GM12878 (cell line): ENCODE measurements at regions of chr19 and their contacts with region 1.

Region 1: DNA sequence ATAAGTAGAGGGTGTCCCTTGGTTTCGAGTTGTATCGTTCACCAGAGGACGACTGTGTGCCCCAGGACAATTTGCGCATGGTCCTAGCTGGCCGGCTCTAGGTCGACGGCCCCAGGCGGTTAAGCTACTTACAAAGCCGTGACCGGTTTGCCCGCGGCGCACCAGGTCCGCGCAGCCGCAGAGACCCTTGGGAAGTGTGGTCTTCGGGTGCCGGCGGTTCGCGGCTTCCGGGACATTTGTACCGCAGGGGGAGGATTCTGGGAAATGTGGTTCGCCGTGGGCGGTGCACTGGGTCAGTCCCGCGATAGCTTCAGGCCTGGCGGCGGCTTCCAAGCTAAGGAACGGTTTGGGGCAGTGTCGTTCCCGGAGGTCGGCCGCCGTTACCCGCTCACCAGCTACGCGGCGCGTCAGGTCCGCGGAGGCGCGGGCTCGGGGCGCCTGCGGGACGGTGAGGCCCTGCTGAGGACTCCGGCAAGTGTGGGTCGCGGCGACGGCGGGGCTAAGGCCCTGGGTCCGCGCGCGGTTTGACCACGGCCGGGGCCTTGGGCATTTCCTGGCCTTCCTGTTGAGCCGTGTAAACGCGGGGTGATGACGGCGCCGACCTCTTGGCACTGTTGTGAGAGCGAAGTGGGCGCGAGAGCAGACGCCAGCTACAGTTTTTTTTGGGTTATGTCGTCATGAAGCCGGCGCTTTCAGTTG is at the start of gene ZNF302:
- DNase-seq: peak; percentile 85
- ATAC-seq: peak; percentile 94
- H3K4me3 ChIP-seq: peak within 1 kb of the TSS; percentile 67
- H3K27ac ChIP-seq: peak within 1 kb of the TSS; percentile 95
- H3K4me1 ChIP-seq: peaks cover 10% of the 10 kb centered on the region
- H3K27me3 ChIP-seq: no peaks in the 10 kb centered on the region
- CTCF ChIP-seq: no peak
- EP300 ChIP-seq: no peak; a peak in 1 of 4 replicates
- POLR2A ChIP-seq: peak; percentile 93
- RAD21 ChIP-seq: no peak
- polyA plus RNA-seq, gene ZNF302: 8.4 to 8.6 TPM

Region 2: GRCh38 chr19:34171877-34172660 is 505.5 kb before region 1 on chr19 and contains the start of gene LSM14A:
- CTCF ChIA-PET with region 1: no interaction called
- POLR2A ChIA-PET with region 1: no interaction called
- RAD21 ChIA-PET with region 1: no interaction called
- SMC1A ChIA-PET with region 1: no interaction called
- in situ Hi-C with region 1: no loop called
- intact Hi-C with region 1: loop called (anchors 5 kb)
- DNase-seq: peak; percentile 33
- ATAC-seq: peak; percentile 76
- H3K4me3 ChIP-seq: peak within 1 kb of the TSS; percentile 80
- H3K27ac ChIP-seq: peak within 1 kb of the TSS; percentile 99
- H3K4me1 ChIP-seq: peaks cover 17% of the 10 kb centered on the region
- H3K27me3 ChIP-seq: no peaks in the 10 kb centered on the region
- CTCF ChIP-seq: no peak
- EP300 ChIP-seq: no peak
- POLR2A ChIP-seq: peak; percentile 96
- RAD21 ChIP-seq: no peak
- polyA plus RNA-seq, gene LSM14A: 21.9 to 31.1 TPM

Region 3: GRCh38 chr19:34639491-34640085 is 37.9 kb before region 1 on chr19:
- CTCF ChIA-PET with region 1: interaction called, 12 read pairs
- POLR2A ChIA-PET with region 1: interaction called, 7 read pairs
- RAD21 ChIA-PET with region 1: no interaction called
- SMC1A ChIA-PET with region 1: no interaction called
- in situ Hi-C with region 1: no loop called
- intact Hi-C with region 1: no loop called
- DNase-seq: peak; percentile 13
- ATAC-seq: peak; percentile 72
- H3K4me3 ChIP-seq: no peak overlapping the region
- H3K27ac ChIP-seq: no peak overlapping the region
- H3K4me1 ChIP-seq: no peaks in the 10 kb centered on the region
- H3K27me3 ChIP-seq: no peaks in the 10 kb centered on the region
- CTCF ChIP-seq: peak; percentile 75 to 76 (median 76)
- EP300 ChIP-seq: no peak
- POLR2A ChIP-seq: no peak
- RAD21 ChIP-seq: peak; percentile 80

Region 4: DNA sequence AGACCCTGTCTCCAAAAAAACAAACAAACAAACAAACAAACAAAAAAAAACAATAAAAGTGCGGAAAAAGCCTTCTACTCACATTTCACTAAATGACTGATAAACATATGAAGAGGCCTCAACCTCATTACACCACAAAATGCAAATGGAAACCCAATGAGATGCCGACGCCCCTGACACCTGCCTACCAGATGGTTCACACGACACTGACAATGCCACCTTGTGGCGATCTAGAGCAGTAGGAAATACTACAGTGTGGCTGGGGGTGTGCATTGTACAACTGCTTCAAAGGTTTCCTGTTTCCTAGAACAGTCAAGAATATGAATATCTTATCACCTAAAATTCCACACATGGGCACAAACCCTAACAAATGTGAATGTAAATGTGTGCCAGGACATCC is 14.6 kb before region 1 on chr19:
- CTCF ChIA-PET with region 1: interaction called, 12 read pairs
- POLR2A ChIA-PET with region 1: no interaction called
- RAD21 ChIA-PET with region 1: no interaction called
- SMC1A ChIA-PET with region 1: no interaction called
- in situ Hi-C with region 1: no loop called
- intact Hi-C with region 1: no loop called
- DNase-seq: no peak
- ATAC-seq: peak; percentile 96
- H3K4me3 ChIP-seq: no peak overlapping the region
- H3K27ac ChIP-seq: no peak overlapping the region
- H3K4me1 ChIP-seq: no peaks in the 10 kb centered on the region
- H3K27me3 ChIP-seq: no peaks in the 10 kb centered on the region
- CTCF ChIP-seq: peak; percentile 39 to 48 (median 42); a peak in 4 of 6 replicates
- EP300 ChIP-seq: no peak
- POLR2A ChIP-seq: no peak
- RAD21 ChIP-seq: peak; percentile 25; the same call in 1 of the 2 replicates

Region 5: DNA sequence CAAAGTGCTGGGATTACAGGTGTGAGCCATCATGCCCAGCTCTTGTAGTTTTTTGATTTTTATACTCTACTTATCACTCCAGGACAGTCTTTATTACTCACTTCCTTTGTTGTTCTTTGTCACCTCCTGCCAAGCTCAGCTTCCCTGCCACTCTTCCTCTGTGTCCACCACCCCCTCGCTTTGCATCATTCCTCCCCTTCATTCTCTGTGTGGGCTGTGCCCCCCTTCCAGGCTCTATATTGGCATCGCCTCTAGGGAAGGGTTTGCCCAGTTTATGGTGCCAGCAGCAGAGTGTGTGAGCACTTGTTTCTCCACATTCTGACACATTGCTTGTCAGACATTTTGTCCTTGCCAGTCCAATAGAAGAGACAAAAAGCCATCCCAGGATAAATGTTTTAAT is 15.0 kb after region 1 on chr19:
- CTCF ChIA-PET with region 1: no interaction called
- POLR2A ChIA-PET with region 1: no interaction called
- RAD21 ChIA-PET with region 1: no interaction called
- SMC1A ChIA-PET with region 1: no interaction called
- in situ Hi-C with region 1: no loop called
- intact Hi-C with region 1: no loop called
- DNase-seq: no peak
- ATAC-seq: no peak
- H3K4me3 ChIP-seq: no peak overlapping the region
- H3K27ac ChIP-seq: no peak overlapping the region
- H3K4me1 ChIP-seq: no peaks in the 10 kb centered on the region
- H3K27me3 ChIP-seq: no peaks in the 10 kb centered on the region
- CTCF ChIP-seq: no peak
- EP300 ChIP-seq: no peak
- POLR2A ChIP-seq: no peak
- RAD21 ChIP-seq: no peak

Region 6: GRCh38 chr19:34722353-34722752 is 44.8 kb after region 1 on chr19:
- CTCF ChIA-PET with region 1: no interaction called
- POLR2A ChIA-PET with region 1: no interaction called
- RAD21 ChIA-PET with region 1: no interaction called
- SMC1A ChIA-PET with region 1: no interaction called
- in situ Hi-C with region 1: no loop called
- intact Hi-C with region 1: no loop called
- DNase-seq: no peak
- ATAC-seq: no peak
- H3K4me3 ChIP-seq: no peak overlapping the region
- H3K27ac ChIP-seq: no peak overlapping the region
- H3K4me1 ChIP-seq: no peaks in the 10 kb centered on the region
- H3K27me3 ChIP-seq: no peaks in the 10 kb centered on the region
- CTCF ChIP-seq: no peak
- EP300 ChIP-seq: no peak
- POLR2A ChIP-seq: no peak
- RAD21 ChIP-seq: no peak

Region 7: DNA sequence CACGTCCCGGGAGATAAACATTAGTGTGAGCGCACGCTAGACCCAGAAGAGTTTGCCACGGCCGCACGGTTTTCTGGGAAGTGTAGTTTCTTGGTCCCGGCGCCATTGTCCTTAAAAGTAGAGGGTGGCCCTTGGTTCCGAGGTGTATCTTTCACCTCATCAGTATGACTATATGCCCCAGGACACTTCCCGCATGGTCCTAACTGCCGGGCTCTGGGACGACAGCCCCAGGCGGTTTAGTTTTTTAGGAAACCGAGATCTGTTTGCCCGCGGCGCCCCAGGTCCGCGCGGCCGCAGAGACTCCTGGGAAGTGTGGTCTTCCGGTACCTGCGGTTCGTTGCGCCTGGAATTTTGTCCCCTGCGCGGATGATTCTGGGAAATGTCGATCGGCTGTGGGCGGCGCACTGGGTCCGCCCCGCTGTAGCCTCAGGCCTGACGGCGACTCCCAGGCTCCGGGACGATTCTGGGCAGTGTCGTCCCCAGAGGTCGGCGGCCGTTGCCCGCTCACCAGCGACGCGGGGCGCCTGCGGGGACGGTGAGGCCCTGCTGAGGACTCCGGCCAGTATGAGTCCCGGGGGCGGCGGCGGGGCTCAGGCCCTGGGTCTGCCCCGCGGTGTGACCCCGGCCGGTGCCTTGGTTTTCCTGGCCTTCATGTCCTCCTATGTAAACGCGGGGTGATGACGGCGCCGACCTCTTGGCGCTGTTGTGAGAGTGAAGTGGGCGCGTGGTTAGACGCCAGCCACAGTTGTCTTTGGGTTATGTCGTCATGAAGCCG is 56.5 kb after region 1 on chr19 and contains the start of gene ZNF181:
- CTCF ChIA-PET with region 1: interaction called, 6 read pairs
- POLR2A ChIA-PET with region 1: no interaction called
- RAD21 ChIA-PET with region 1: no interaction called
- SMC1A ChIA-PET with region 1: no interaction called
- in situ Hi-C with region 1: no loop called
- intact Hi-C with region 1: loop called (anchors 1 kb)
- DNase-seq: peak; percentile 53
- ATAC-seq: peak; percentile 92
- H3K4me3 ChIP-seq: peak within 1 kb of the TSS; percentile 79
- H3K27ac ChIP-seq: peak within 1 kb of the TSS; percentile 89
- H3K4me1 ChIP-seq: no peaks in the 10 kb centered on the region
- H3K27me3 ChIP-seq: no peaks in the 10 kb centered on the region
- CTCF ChIP-seq: no peak
- EP300 ChIP-seq: no peak
- POLR2A ChIP-seq: peak; percentile 88
- RAD21 ChIP-seq: no peak
- polyA plus RNA-seq, gene ZNF181: 2.1 to 2.7 TPM